B cell (primary cell): ENCODE measurements at regions of chr3 and their contacts with region 1.

Region 1: DNA sequence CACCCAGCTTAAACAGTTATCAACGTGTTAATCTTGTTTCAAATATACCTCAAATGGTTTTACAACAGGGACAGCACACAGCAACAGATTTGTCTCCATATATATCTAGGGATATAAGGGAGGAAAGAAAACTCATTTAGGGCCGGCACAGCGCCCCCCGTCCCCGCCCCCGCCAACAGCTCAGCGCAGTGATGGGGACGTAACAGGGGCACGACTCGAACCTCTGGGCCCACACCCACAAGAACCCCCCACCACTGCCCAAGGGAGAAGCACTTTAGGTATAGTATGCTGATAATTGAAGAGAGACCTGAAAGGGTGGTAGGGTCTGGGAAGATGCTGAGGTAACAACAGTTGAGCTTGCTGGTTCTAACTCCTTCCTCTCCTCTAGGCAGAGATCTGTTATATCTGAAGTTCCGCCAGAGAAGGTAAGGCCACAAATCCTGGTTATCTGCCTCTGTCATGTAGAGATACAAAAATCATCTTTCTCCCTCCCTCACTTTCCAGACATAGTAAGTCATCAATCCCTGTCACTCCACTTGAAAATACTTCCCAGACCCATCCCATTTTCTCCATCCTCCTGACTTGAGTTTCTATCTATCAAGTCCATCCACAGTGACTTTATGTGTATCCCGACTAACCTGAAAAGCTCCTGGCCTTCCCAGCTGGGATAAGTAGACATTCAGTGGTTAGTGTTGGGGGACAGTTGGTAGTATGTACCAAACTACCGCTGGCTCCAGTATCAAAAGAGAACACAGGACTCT is 126.9 kb downstream of the PDZRN3 start:
- DNase-seq: no peak
- ATAC-seq: no peak
- H3K4me3 ChIP-seq: no peak overlapping the region
- H3K4me3 Mint-ChIP-seq: no peak overlapping the region
- H3K27ac ChIP-seq: no peak overlapping the region
- H3K27ac Mint-ChIP-seq: no peak overlapping the region
- H3K4me1 ChIP-seq: no peaks in the 10 kb centered on the region
- H3K4me1 Mint-ChIP-seq: no peaks in the 10 kb centered on the region
- H3K27me3 ChIP-seq: peaks cover 0 to 2% (median 0%) of the 10 kb centered on the region in 4 experiments
- H3K27me3 Mint-ChIP-seq: peaks cover 24% of the 10 kb centered on the region
- CTCF ChIP-seq: no peak

Region 2: GRCh38 chr3:73451306-73451944 is 46.4 kb before region 1 on chr3:
- CTCF ChIA-PET with region 1: no interaction called
- POLR2A ChIA-PET with region 1: no interaction called
- intact Hi-C with region 1: no loop called
- DNase-seq: peak; percentile 48
- ATAC-seq: peak; percentile 56
- H3K4me3 ChIP-seq: no peak overlapping the region
- H3K4me3 Mint-ChIP-seq: peak overlapping the region; percentile 8
- H3K27ac ChIP-seq: no peak overlapping the region
- H3K27ac Mint-ChIP-seq: no peak overlapping the region
- H3K4me1 ChIP-seq: peaks cover 21 to 22% of the 10 kb centered on the region in 2 donors
- H3K4me1 Mint-ChIP-seq: peaks cover 16% of the 10 kb centered on the region
- H3K27me3 ChIP-seq: no peaks in the 10 kb centered on the region
- H3K27me3 Mint-ChIP-seq: no peaks in the 10 kb centered on the region
- CTCF ChIP-seq: no peak

Region 3: DNA sequence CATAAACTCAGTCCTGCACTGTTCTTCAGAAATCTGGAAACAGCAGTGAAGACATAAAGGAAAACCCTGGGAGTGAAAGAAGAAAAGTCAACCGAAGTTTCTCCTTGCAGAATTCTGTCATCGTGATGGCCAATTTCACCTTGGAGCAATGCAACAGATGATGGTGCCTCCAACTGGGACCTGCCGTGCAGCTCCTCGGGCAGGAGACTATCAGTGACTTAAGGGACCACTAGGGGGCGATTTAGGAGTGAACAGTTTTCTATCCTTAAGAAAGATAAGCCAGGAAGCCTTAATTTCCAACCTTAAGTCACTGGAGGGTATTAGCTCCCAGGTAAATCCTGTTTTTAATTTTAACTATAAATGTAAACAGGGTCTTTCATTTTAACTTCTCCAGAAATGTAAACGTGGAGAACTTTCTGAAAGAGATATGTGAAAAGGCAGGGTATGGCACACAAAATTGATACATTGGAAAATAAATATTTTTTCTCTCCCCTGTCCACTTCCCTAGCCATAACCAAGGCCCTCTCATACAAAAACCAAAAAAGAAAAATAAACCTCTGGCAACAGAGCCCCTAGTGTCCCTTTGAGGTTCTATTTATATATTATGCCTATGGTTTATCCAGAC is 10.6 kb after region 1 on chr3:
- CTCF ChIA-PET with region 1: interaction called, 11 read pairs
- POLR2A ChIA-PET with region 1: no interaction called
- intact Hi-C with region 1: no loop called
- DNase-seq: peak; percentile 31
- ATAC-seq: peak; percentile 33
- H3K4me3 ChIP-seq: no peak overlapping the region
- H3K4me3 Mint-ChIP-seq: no peak overlapping the region
- H3K27ac ChIP-seq: no peak overlapping the region
- H3K27ac Mint-ChIP-seq: no peak overlapping the region
- H3K4me1 ChIP-seq: no peaks in the 10 kb centered on the region
- H3K4me1 Mint-ChIP-seq: no peaks in the 10 kb centered on the region
- H3K27me3 ChIP-seq: no peaks in the 10 kb centered on the region
- H3K27me3 Mint-ChIP-seq: peaks cover 8% of the 10 kb centered on the region
- CTCF ChIP-seq: peak; percentile 84

Region 4: DNA sequence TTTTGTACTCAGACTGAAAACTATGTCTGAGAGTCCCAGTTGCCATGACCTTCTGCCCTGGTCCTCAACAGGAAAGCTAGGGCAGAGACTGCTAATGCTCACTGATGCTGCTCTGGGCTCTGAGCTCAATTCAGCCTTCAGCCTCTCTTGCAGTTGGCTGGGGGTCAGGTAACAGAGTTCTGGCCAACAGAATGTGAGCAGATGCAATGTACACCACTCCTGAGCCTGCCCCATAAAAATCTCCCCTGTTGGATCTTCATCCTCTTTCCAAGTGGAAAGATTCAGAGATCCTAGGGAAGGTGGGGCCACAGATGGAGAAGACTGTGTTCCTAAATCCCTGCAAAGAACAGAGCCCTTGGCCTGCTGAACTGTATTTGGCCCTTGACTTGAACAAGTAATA is 39.1 kb after region 1 on chr3:
- CTCF ChIA-PET with region 1: no interaction called
- POLR2A ChIA-PET with region 1: no interaction called
- intact Hi-C with region 1: no loop called
- DNase-seq: no peak
- ATAC-seq: no peak
- H3K4me3 ChIP-seq: no peak overlapping the region
- H3K4me3 Mint-ChIP-seq: no peak overlapping the region
- H3K27ac ChIP-seq: no peak overlapping the region
- H3K27ac Mint-ChIP-seq: no peak overlapping the region
- H3K4me1 ChIP-seq: no peaks in the 10 kb centered on the region
- H3K4me1 Mint-ChIP-seq: no peaks in the 10 kb centered on the region
- H3K27me3 ChIP-seq: no peaks in the 10 kb centered on the region
- H3K27me3 Mint-ChIP-seq: no peaks in the 10 kb centered on the region
- CTCF ChIP-seq: no peak